Heart right ventricle (tissue), 16 donors: ENCODE measurements at regions of chr20 and their contacts with region 1.

Region 1: DNA sequence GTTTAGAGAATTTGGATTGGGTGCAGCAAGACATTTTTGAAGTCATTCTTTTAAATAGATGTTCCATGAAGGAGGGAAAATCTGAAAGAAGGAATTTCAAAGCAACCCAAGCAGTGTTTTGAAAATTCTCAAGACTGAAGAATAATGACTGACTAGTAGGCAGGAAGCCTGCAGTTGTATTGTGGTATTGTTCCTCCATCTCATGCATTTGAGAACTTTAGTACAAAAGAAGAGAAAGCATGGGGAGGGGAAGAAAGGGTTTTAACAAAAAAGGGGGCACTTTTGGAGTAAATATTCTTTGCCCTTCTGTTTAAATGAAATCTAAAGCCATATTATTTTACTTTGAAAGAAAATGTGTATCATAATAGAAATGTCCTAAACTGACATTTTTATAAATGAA is 6.6 kb downstream of the NCOA3 start:
- DNase-seq: no peak
- ATAC-seq: no peak
- H3K4me3 ChIP-seq: no peak overlapping the region
- H3K27ac ChIP-seq: peak overlapping the region in 1 of 10 donors; percentile 0
- H3K4me1 ChIP-seq: peaks cover 3 to 75% (median 37%) of the 10 kb centered on the region in 9 donors
- H3K27me3 ChIP-seq: no peaks in the 10 kb centered on the region
- CTCF ChIP-seq: no peak

Region 2: GRCh38 chr20:47540443-47541354 is 32.4 kb after region 1 on chr20:
- intact Hi-C with region 1: loop called in 3 of 10 experiments (anchors 5 kb)
- DNase-seq: no peak
- ATAC-seq: no peak
- H3K4me3 ChIP-seq: no peak overlapping the region
- H3K27ac ChIP-seq: no peak overlapping the region
- H3K4me1 ChIP-seq: peaks cover 5 to 68% (median 54%) of the 10 kb centered on the region in 9 donors
- H3K27me3 ChIP-seq: no peaks in the 10 kb centered on the region
- CTCF ChIP-seq: no peak